PC-3 (cell line): ENCODE measurements at regions of chr10 and their contacts with region 1.

Region 1: DNA sequence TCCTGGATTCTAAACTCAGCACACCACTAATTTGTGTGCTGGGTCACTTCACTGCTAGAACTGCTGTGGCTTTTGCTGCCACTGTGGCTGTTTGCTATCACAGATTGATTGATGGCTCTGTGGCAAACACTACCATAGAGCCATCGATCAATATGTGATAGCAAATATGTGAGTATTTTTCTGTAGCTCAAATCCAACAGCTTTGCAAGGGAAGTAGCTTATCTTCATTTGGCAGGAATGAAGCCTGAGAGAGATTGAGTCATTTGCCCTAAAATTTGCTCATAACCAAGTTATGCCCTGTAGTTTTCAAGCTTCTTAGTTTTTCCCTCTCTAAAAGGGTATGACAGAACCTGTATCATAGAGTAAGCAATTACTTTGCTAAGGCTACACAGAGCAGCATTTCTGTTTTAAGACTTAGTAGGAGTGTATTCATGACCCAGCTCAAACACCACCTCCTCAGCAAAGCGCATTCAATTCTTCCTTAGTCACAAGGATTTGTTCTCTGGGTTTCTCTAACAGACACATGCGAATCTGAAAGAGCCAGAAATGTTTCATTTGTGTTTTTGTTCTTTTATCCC is 43.1 kb downstream of the MINPP1 start:
- DNase-seq: peak; percentile 87
- ATAC-seq: peak; percentile 89
- H3K4me3 ChIP-seq: peak overlapping the region; percentile 61
- H3K27ac ChIP-seq: peak overlapping the region; percentile 98
- H3K4me1 ChIP-seq: peaks cover 54% of the 10 kb centered on the region
- H3K27me3 ChIP-seq: no peaks in the 10 kb centered on the region
- CTCF ChIP-seq: no peak

Region 2: DNA sequence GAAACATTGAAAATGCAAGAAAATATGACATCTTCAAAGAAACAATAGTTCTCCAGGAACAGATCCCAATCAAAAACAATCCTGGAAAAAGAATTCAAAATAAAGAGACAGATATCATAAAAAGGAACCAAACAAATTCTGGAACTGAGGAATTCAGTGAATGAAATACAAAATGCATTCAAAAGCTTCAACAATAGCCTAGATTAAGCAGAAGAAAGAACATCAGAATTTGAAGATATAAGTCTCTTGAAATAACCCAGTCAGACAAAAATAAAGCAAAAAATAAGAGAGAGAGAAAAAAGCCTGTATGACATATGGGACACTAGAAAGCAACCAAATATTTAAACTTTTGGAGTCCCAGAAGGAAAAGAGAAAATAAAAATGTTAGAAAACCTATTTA is 17.2 kb after region 1 on chr10:
- CTCF ChIA-PET with region 1: no interaction called
- POLR2A ChIA-PET with region 1: no interaction called
- intact Hi-C with region 1: no loop called
- DNase-seq: no peak
- ATAC-seq: no peak
- H3K4me3 ChIP-seq: no peak overlapping the region
- H3K27ac ChIP-seq: no peak overlapping the region
- H3K4me1 ChIP-seq: no peaks in the 10 kb centered on the region
- H3K27me3 ChIP-seq: no peaks in the 10 kb centered on the region
- CTCF ChIP-seq: no peak

Region 3: DNA sequence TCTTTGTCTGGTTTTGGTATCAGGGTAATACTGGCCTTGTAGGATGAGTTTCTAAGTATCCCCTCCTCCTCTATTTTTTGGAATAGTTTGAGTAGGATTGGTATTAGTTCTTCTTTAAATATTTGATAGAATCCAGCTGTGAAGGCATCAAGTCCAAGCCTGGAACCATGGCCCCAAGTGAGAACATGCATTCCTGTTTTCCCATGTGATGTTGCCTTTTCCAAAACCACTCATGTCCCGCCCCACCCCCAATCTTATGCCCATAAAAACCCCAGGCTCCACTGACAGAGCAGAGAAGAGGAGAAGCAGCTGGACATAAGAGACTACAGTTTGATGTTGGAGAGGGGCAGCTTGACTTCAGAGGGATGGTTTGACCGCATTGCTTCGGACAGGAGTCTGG is 28.0 kb after region 1 on chr10:
- CTCF ChIA-PET with region 1: no interaction called
- POLR2A ChIA-PET with region 1: no interaction called
- intact Hi-C with region 1: no loop called
- DNase-seq: no peak
- ATAC-seq: no peak
- H3K4me3 ChIP-seq: no peak overlapping the region
- H3K27ac ChIP-seq: no peak overlapping the region
- H3K4me1 ChIP-seq: peaks cover 20% of the 10 kb centered on the region
- H3K27me3 ChIP-seq: no peaks in the 10 kb centered on the region
- CTCF ChIP-seq: no peak

Region 4: DNA sequence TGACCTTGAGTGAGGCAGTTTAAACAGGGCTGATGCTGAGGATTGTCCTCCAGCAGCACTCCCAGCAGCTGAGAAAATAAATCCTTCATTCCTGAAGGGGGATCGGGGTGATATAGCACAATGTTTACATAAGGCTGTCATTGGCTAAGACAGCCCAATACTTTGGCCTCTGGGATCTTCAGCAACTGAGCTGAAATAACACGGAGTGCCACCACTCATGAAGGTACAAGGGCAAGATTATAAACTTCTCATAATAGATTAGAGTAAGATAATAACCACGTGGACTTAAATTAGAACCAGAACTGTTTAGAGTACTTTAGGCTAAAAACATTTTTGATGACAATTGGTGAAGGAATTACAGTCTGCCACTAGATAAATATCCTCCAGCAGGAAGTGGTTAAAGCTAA is 41.8 kb after region 1 on chr10:
- CTCF ChIA-PET with region 1: no interaction called
- POLR2A ChIA-PET with region 1: no interaction called
- intact Hi-C with region 1: loop called (anchors 5 kb)
- DNase-seq: peak; percentile 42
- ATAC-seq: peak; percentile 57
- H3K4me3 ChIP-seq: no peak overlapping the region
- H3K27ac ChIP-seq: no peak overlapping the region
- H3K4me1 ChIP-seq: peaks cover 39% of the 10 kb centered on the region
- H3K27me3 ChIP-seq: no peaks in the 10 kb centered on the region
- CTCF ChIP-seq: no peak